ENCODE measurements at regions of chr11 and their contacts with region 1.

Region 1: GRCh38 chr11:20658135-20658534 is 11.3 kb upstream of the NELL1 start:
- DNase-seq: no peak
- ATAC-seq: no peak
- H3K4me3 ChIP-seq: no peak overlapping the region
- H3K27ac ChIP-seq: no peak overlapping the region
- H3K4me1 ChIP-seq: no peaks in the 10 kb centered on the region
- H3K27me3 ChIP-seq: peaks cover 0 to 33% (median 11%) of the 10 kb centered on the region in 7 donors
- CTCF ChIP-seq: no peak

Region 2: DNA sequence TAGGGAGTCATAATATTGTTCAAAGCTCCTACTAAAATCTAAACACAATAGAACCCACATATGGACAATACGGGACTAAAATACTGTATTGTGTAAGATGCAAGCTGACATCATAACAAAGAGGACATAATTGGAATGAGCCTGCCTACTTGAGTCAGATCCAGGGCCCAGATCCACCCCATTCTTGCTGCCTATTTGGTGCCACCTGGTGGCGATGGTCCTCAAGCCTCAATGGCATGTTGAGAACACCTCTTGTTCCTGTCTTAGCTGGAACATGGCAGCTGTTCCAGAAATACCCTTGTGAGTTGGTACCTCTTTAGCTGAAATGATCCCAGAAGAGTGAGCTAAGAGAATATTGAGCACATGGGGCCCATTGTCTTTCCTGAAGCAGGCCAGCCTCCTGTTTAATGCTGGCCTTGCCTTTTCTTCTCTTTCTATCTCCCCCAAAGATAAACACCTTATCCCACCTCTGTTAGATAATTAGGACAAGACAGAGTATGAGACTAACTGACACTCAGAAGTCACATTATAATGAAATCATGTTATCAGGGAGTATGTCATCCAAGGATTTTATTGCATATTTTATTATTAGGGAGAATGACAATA is 853.8 kb after region 1 on chr11:
- intact Hi-C with region 1: loop called in 1 of 10 experiments (anchors 10 kb)
- DNase-seq: peak in 1 of 2 donors; percentile 18
- ATAC-seq: no peak
- H3K4me3 ChIP-seq: no peak overlapping the region
- H3K27ac ChIP-seq: no peak overlapping the region
- H3K4me1 ChIP-seq: no peaks in the 10 kb centered on the region
- H3K27me3 ChIP-seq: no peaks in the 10 kb centered on the region
- CTCF ChIP-seq: peak in 8 of 9 donors; percentile 14 to 53 (median 27)

Measured in heart right ventricle (tissue), 16 donors.